GM12878 (cell line): ENCODE measurements at regions of chr20 and their contacts with region 1.

Region 1: DNA sequence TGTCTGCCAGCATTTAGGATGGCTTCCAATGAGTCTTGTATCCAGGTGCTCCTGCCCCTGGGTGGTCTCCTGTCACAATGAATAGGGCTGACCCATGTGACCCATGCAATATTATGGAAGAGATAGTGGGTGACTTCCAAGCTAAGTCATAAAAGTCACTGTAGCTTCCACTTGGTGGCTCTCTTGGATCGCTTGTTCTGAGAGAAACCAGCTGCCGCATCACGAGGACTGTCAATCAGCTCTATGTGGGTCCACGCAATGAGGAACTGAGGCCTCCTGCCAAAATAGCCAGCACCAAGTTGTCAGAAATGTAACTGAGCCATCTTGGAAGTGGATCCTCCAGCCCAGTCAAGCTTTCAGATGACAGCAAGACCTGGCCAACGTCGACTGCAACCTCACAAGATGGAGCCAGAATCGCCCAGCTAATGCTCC is 14.9 kb upstream of the MATN4 start:
- DNase-seq: no peak
- ATAC-seq: peak; percentile 66
- H3K4me3 ChIP-seq: no peak overlapping the region
- H3K27ac ChIP-seq: no peak overlapping the region
- H3K4me1 ChIP-seq: peaks cover 19% of the 10 kb centered on the region
- H3K27me3 ChIP-seq: no peaks in the 10 kb centered on the region; a peak in 1 of 4 replicates
- CTCF ChIP-seq: peak; percentile 12 to 56 (median 29); a peak in 3 of 6 replicates
- EP300 ChIP-seq: no peak
- POLR2A ChIP-seq: no peak
- RAD21 ChIP-seq: peak; percentile 45; the same call in 1 of the 2 replicates

Region 2: GRCh38 chr20:45097485-45098102 is 225.4 kb before region 1 on chr20:
- CTCF ChIA-PET with region 1: no interaction called
- POLR2A ChIA-PET with region 1: no interaction called
- RAD21 ChIA-PET with region 1: no interaction called
- SMC1A ChIA-PET with region 1: no interaction called
- in situ Hi-C with region 1: no loop called
- intact Hi-C with region 1: no loop called
- DNase-seq: no peak
- ATAC-seq: peak; percentile 32; the same call in 1 of the 3 replicates
- H3K4me3 ChIP-seq: no peak overlapping the region; the same call in 1 of the 2 replicates
- H3K27ac ChIP-seq: no peak overlapping the region
- H3K4me1 ChIP-seq: no peaks in the 10 kb centered on the region
- H3K27me3 ChIP-seq: peaks cover 2 to 9% of the 10 kb centered on the region in 2 experiments; a peak in 3 of 4 replicates
- CTCF ChIP-seq: peak; percentile 21 to 43 (median 37); a peak in 5 of 6 replicates
- EP300 ChIP-seq: no peak
- POLR2A ChIP-seq: no peak
- RAD21 ChIP-seq: 0 out of 2 replicates have a peak, but pooled peaks have one; percentile 12

Region 3: GRCh38 chr20:45293041-45294002 is 29.6 kb before region 1 on chr20:
- CTCF ChIA-PET with region 1: interaction called, 12 read pairs
- POLR2A ChIA-PET with region 1: no interaction called
- RAD21 ChIA-PET with region 1: no interaction called
- SMC1A ChIA-PET with region 1: interaction called, 4 read pairs
- in situ Hi-C with region 1: no loop called
- intact Hi-C with region 1: no loop called
- DNase-seq: no peak
- ATAC-seq: peak; percentile 93
- H3K4me3 ChIP-seq: peak overlapping the region; percentile 30; the same call in 1 of the 2 replicates
- H3K27ac ChIP-seq: no peak overlapping the region
- H3K4me1 ChIP-seq: no peaks in the 10 kb centered on the region
- H3K27me3 ChIP-seq: peaks cover 6 to 7% of the 10 kb centered on the region in 2 experiments; a peak in 3 of 4 replicates
- CTCF ChIP-seq: peak; percentile 83 to 96 (median 89)
- EP300 ChIP-seq: no peak
- POLR2A ChIP-seq: no peak
- RAD21 ChIP-seq: peak; percentile 25; the same call in 1 of the 2 replicates

Region 4: DNA sequence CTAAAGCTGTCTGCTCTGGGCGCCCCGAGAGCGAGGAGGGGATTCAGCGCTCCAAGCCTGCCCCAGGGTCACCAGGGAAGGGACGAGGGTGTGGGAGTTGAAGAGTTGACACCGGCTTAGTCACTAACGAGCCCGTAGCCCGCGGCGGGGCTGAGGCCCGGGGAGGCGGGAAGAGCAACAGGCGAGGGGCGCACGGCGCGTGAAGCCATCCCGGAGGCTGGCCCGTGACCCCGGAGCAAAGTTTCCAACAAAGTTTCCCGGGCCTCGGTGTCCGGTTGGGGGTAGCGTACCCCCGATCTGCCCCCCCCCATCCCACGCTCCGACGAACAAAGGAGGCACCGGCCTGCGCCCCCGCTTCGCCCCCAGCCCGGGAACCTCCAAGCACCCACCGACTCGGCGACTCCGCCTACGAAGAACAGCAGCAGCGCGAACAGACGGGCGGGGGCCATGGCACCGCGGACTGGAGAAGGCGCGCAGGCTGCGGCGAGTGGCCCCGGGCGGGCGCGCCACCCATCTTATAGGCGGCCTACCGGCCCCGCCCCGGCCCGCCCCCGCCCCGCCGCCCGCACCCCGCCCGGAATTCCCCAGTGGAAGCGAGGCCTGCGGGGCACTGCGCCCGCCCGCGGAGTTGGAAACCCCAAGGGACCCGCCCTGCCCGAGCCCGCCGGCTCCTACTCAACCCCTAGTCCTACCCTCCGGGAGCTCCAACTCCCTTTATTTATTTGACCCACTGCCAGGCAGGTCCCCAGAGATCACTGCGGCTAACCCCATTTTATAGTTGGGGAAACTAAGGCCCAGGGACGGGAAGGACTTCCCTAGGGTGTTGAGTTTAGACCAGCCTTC is 25.2 kb after region 1 on chr20 and contains the start of gene SDC4:
- CTCF ChIA-PET with region 1: interaction called, 13 read pairs
- POLR2A ChIA-PET with region 1: no interaction called
- RAD21 ChIA-PET with region 1: interaction called, 3 read pairs
- SMC1A ChIA-PET with region 1: interaction called, 4 read pairs
- in situ Hi-C with region 1: no loop called
- intact Hi-C with region 1: no loop called
- DNase-seq: no peak
- ATAC-seq: peak; percentile 84
- H3K4me3 ChIP-seq: peak within 1 kb of the TSS; percentile 49; the same call in 1 of the 2 replicates
- H3K27ac ChIP-seq: no peak within 1 kb of the TSS
- H3K4me1 ChIP-seq: peaks cover 6% of the 10 kb centered on the region
- H3K27me3 ChIP-seq: 0 out of 4 replicates have a peak, but pooled peaks cover 0 to 6% of the 10 kb centered on the region in 2 experiments
- CTCF ChIP-seq: no peak
- EP300 ChIP-seq: no peak
- POLR2A ChIP-seq: peak; percentile 79
- RAD21 ChIP-seq: no peak
- polyA plus RNA-seq, gene SDC4: 0.52 to 0.66 TPM

Region 5: DNA sequence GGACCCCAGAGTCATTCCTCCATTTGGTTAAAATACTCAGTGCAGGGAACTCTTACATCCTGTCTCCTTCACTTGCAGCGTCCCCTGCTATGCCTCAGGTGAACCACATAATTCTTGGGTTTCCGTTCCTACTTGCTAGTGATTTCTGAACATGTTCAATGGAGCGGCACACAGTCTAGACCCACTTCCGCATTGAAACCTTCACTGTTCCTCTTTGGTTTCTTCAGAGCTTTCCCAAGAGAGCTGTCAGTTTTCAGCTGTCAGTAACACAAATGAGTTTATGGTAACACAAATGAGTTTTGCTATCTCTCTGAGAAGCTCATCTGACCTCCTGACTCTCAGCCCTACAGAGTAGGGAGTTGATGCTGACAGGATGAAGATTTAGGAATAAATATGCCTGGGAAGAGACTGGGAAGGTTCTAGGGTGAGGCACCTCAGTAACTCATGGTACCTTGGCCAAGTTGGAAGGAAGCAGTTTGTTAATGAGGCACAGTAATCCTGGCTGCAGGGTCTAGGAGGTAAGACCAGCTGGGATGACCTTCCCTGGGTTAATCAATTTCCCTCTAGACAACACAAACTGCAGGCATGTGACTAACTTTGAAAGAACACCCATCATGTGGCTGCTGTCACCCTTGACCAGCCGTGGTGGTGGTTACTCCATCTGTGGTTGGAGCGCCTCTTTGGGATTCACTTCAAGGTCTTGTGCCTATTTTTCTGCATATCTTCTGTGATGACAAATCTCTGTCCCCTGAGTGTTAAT is 45.4 kb after region 1 on chr20:
- CTCF ChIA-PET with region 1: interaction called, 97 read pairs
- POLR2A ChIA-PET with region 1: interaction called, 4 read pairs
- RAD21 ChIA-PET with region 1: interaction called, 30 read pairs
- SMC1A ChIA-PET with region 1: interaction called, 23 read pairs
- in situ Hi-C with region 1: no loop called
- intact Hi-C with region 1: loop called (anchors 2 kb)
- DNase-seq: peak; percentile 99
- ATAC-seq: peak; percentile 89
- H3K4me3 ChIP-seq: peak overlapping the region; percentile 32; the same call in 1 of the 2 replicates
- H3K27ac ChIP-seq: peak overlapping the region; percentile 64; the same call in 1 of the 2 replicates
- H3K4me1 ChIP-seq: peaks cover 40% of the 10 kb centered on the region
- H3K27me3 ChIP-seq: no peaks in the 10 kb centered on the region
- CTCF ChIP-seq: peak in 1 of 3 experiments; percentile 20; a peak in 2 of 6 replicates
- EP300 ChIP-seq: peak; percentile 96 to 99
- POLR2A ChIP-seq: no peak
- RAD21 ChIP-seq: no peak

Region 6: DNA sequence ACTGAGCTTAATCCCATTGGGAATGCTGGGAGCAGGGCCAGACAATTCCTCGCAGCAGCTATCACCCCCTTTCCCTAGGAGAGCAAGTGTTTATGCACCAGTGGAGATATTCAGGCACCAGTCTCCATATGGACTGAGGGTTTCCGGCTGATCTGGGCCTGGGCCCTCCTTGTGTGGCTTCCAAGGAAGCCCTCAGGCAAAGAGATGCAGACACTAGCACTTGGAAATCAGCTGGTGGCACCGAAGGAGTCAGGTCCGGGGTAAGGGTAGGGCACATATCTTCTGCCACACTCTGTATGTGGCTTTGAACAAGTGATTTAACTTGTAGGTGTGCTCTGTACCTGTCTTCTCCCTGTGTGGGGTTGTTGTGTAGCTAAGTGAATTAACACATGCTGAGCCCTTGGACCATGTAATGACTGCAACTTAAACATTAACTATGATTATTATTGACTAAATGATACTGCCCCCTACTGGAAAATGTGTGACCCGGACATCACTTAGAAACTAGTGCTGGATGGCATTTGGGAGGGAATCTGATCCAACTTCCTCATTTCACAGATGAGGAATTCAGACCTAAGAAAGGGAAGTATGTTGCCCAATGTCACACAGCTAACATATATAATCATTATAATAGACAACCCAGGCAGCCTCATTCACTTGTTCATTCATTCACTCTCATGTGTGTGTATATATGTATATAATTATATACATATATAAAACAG is 127.3 kb after region 1 on chr20:
- CTCF ChIA-PET with region 1: interaction called, 38 read pairs
- POLR2A ChIA-PET with region 1: interaction called, 3 read pairs
- RAD21 ChIA-PET with region 1: interaction called, 10 read pairs
- SMC1A ChIA-PET with region 1: interaction called, 7 read pairs
- in situ Hi-C with region 1: no loop called
- intact Hi-C with region 1: loop called (anchors 5 kb)
- DNase-seq: no peak
- ATAC-seq: peak; percentile 74
- H3K4me3 ChIP-seq: no peak overlapping the region
- H3K27ac ChIP-seq: no peak overlapping the region
- H3K4me1 ChIP-seq: no peaks in the 10 kb centered on the region
- H3K27me3 ChIP-seq: no peaks in the 10 kb centered on the region; a peak in 3 of 4 replicates
- CTCF ChIP-seq: peak; percentile 46 to 61 (median 60)
- EP300 ChIP-seq: no peak
- POLR2A ChIP-seq: no peak
- RAD21 ChIP-seq: peak; percentile 58